Upper lobe of right lung (tissue), 1 donor: ENCODE measurements at regions of chr10 and their contacts with region 1.

Region 1: GRCh38 chr10:97676770-97677581 is 10.1 kb downstream of the AVPI1 start:
- DNase-seq: no peak
- ATAC-seq: peak; percentile 91
- H3K4me3 ChIP-seq: no peak overlapping the region
- H3K27ac ChIP-seq: no peak overlapping the region
- H3K4me1 ChIP-seq: peaks cover 2% of the 10 kb centered on the region
- H3K27me3 ChIP-seq: no peaks in the 10 kb centered on the region
- CTCF ChIP-seq: peak; percentile 95

Region 2: DNA sequence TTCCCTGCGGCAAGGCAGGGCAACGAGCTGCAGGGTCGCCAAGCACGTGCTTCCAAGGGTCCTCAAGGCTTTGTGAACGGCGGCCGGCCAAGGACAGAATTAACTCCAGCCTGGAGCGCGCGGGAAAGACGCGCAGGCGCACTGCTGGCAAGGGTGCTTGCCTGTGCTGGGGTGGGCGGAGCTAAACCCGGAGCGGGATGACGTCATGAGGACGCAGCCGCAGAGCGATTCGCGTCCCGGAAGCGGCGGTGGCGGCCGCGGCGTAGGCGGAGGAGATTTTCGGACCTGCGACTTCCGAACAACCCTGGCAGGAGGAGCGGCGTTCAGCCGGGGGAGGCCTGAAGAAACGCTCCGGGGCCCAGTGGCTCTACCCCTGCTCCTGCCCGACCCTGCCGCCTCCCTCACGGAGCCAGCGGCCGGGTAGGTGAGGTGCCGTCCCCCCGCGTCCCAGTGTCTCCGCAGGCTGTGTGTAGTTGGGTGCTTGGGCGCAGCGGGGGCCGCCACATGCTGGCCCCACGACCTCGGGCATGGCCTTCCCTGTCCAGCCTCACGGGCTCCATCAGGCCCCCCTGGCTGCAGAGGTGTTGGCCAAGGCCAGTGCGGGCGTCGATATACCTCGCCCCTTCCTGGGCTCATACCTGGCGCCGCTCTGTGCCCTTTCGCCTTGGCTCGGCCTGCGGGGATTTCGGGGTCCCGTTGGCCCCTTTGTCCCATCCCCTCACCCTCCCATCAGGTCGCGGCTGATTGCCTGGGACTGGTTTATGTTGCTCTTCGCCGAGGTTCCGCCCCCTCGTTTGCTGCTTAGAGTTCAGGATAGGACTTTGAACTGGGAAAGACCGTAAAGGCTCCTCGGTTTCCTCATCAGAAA is 60.2 kb after region 1 on chr10 and contains the start of gene ZFYVE27:
- intact Hi-C with region 1: loop called (anchors 10 kb)
- DNase-seq: peak; percentile 99
- ATAC-seq: peak; percentile 96
- H3K4me3 ChIP-seq: peak within 1 kb of the TSS; percentile 99
- H3K27ac ChIP-seq: peak within 1 kb of the TSS; percentile 98
- H3K4me1 ChIP-seq: peaks cover 17% of the 10 kb centered on the region
- H3K27me3 ChIP-seq: no peaks in the 10 kb centered on the region
- CTCF ChIP-seq: no peak
- total RNA-seq, gene ZFYVE27: 29.4 TPM